HCT116 (cell line): ENCODE measurements at regions of chr11 and their contacts with region 1.

Region 1: DNA sequence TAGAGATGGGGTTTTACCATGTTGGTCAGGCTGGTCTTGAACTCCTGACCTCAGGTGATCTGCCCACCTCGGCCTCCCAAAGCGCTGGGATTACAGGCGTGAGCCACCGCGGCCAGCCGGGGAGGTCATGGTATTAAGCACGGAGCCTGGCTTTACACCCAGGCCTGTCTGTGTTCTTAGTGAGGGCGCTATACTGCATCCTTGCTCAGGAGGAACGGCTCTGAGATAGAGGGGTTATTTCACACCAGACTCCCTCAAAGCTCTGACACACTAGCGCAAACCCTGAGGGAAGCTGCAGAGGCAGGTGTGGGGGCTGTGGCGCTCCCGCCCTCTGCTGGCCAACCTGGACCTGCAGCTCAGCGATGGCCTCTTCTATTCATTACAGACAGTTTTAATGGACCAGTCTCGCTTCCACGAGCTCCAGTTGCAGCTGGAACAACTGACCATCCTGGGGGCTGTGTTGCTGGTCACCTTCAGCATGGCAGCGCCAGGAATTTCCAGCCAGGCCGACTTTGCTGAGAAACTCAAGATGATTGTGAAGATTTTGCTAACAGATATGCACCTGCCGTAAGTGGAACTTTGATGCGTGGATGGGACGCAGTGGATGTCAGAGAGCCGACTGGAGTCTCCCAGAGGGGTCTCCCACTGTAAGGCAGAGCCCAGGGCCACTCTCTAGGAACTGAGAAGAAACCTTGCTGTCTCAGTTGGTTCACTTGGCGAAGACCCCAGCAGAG is 26.2 kb downstream of the TCP11L1 start:
- DNase-seq: peak; percentile 28
- ATAC-seq: peak; percentile 72
- H3K4me3 ChIP-seq: no peak overlapping the region
- H3K27ac ChIP-seq: no peak overlapping the region
- H3K4me1 ChIP-seq: peaks cover 13 to 21% of the 10 kb centered on the region in 2 experiments
- H3K27me3 ChIP-seq: no peaks in the 10 kb centered on the region
- CTCF ChIP-seq: peak; percentile 81 to 96 (median 93)
- POLR2A ChIP-seq: no peak
- RAD21 ChIP-seq: peak; percentile 95

Region 2: DNA sequence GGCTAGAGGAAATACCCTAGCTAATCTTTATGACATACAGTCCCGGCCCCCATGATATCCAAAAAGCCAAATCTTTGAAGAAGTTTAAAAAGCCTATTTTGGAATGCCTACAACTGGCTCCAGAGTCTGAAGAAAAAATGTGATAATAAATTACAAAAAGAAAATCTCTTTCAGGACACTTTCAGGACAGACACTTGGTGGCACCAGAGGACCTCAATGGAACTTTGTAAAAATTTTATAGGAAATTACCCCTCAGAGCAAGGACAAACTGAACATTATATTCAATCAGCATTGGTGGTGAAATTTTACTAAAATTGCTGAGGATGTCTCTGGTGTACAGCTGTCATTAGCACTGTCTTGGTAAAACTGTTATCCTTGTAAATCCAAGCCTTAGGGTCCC is 352.1 kb before region 1 on chr11:
- CTCF ChIA-PET with region 1: no interaction called
- POLR2A ChIA-PET with region 1: no interaction called
- RAD21 ChIA-PET with region 1: no interaction called
- intact Hi-C with region 1: loop called (anchors 10 kb)
- DNase-seq: peak; percentile 8
- ATAC-seq: peak; percentile 66
- H3K4me3 ChIP-seq: no peak overlapping the region
- H3K27ac ChIP-seq: no peak overlapping the region
- H3K4me1 ChIP-seq: no peaks in the 10 kb centered on the region
- H3K27me3 ChIP-seq: no peaks in the 10 kb centered on the region
- CTCF ChIP-seq: peak; percentile 55 to 69 (median 68)
- POLR2A ChIP-seq: no peak
- RAD21 ChIP-seq: peak; percentile 81

Region 3: GRCh38 chr11:32809313-32809712 is 256.3 kb before region 1 on chr11:
- CTCF ChIA-PET with region 1: interaction called, 9 read pairs
- POLR2A ChIA-PET with region 1: no interaction called
- RAD21 ChIA-PET with region 1: interaction called in 1 of 2 experiments, 3 read pairs
- intact Hi-C with region 1: loop called (anchors 5 kb)
- DNase-seq: peak; percentile 60
- ATAC-seq: peak; percentile 100
- H3K4me3 ChIP-seq: no peak overlapping the region
- H3K27ac ChIP-seq: no peak overlapping the region
- H3K4me1 ChIP-seq: no peaks in the 10 kb centered on the region
- H3K27me3 ChIP-seq: no peaks in the 10 kb centered on the region
- CTCF ChIP-seq: peak; percentile 64 to 88 (median 86)
- POLR2A ChIP-seq: no peak
- RAD21 ChIP-seq: peak; percentile 78

Region 4: GRCh38 chr11:32870676-32871075 is 194.9 kb before region 1 on chr11:
- CTCF ChIA-PET with region 1: no interaction called
- POLR2A ChIA-PET with region 1: no interaction called
- RAD21 ChIA-PET with region 1: interaction called in 1 of 2 experiments, 3 read pairs
- intact Hi-C with region 1: loop called (anchors 10 kb)
- DNase-seq: no peak
- ATAC-seq: peak; percentile 91
- H3K4me3 ChIP-seq: no peak overlapping the region
- H3K27ac ChIP-seq: no peak overlapping the region
- H3K4me1 ChIP-seq: no peaks in the 10 kb centered on the region
- H3K27me3 ChIP-seq: no peaks in the 10 kb centered on the region
- CTCF ChIP-seq: peak; percentile 28 to 72 (median 53); a peak in 4 of 6 replicates
- POLR2A ChIP-seq: no peak
- RAD21 ChIP-seq: peak; percentile 41; the same call in 1 of the 2 replicates

Region 5: DNA sequence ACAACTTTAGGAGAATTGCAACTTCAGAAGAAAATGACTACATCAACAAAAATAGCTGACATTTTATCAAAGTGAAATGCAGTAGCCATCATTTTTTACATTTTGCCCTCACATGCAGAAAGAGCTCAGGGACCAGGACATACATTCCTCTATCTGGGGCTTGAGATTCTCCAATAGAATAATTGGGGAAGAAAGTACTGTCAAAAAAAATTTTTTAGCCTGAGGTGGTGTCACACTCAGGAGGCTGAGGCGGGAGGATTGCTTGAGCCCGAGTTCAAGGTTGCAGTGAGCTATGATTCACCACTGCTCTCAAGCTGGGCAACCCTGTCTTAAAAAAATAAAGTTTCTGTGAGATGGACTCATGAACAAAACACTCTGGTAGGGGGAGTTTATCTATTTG is 82.1 kb before region 1 on chr11:
- CTCF ChIA-PET with region 1: interaction called, 3 read pairs
- POLR2A ChIA-PET with region 1: no interaction called
- RAD21 ChIA-PET with region 1: no interaction called
- intact Hi-C with region 1: loop called (anchors 5 kb)
- DNase-seq: no peak
- ATAC-seq: no peak
- H3K4me3 ChIP-seq: no peak overlapping the region
- H3K27ac ChIP-seq: no peak overlapping the region
- H3K4me1 ChIP-seq: no peaks in the 10 kb centered on the region
- H3K27me3 ChIP-seq: no peaks in the 10 kb centered on the region
- CTCF ChIP-seq: no peak
- POLR2A ChIP-seq: no peak
- RAD21 ChIP-seq: no peak